Activated CD4-positive, alpha-beta T cell treated with anti-CD3 and anti-CD28 coated beads for 36 hours (primary cell): ENCODE measurements at regions of chr14 and their contacts with region 1.

Region 1: DNA sequence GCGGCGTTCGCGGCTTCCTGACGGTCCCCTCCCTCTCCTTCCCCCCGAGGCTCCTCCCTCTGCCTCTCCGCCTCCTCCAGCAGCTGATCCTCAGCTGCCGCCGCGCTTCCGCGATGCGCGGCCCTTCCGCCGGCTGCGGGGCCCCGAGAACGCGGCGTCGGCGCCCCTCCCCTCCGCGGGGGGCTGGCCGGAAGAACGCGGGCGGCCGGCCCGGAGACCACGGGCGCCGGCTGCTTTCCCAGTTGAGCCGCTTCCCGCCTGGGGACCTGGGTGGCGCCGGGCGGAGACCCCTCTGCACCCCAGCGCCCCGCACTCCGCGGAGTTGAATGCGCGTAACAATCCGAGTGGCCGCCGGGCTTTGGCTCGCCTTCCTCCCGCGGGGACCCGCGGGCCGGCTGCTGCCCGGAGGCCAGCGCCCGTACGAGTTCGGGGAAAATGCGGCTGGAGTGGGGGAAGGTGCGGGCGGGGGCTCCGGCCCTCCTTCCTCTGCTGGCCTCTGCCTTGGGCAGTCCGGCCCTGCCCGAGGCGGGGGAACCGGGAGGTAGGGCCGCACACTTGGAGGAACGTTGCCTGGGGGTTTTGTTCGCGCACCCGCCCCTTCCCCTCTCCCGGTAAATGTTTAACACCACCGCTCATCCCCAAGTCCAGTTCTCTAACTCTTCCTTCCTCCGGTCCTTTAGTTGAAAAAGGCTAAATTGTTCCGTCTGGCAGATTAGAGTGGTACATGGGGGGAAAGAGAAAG is 383 bp upstream of the DCAF5 start:
- DNase-seq: peak; percentile 96
- ATAC-seq: peak; percentile 93
- H3K4me3 Mint-ChIP-seq: peak overlapping the region; percentile 83
- H3K27ac Mint-ChIP-seq: peak overlapping the region; percentile 81
- H3K4me1 Mint-ChIP-seq: peaks cover 30% of the 10 kb centered on the region
- H3K27me3 Mint-ChIP-seq: no peaks in the 10 kb centered on the region

Region 2: GRCh38 chr14:67619446-67620216 is 1533.7 kb before region 1 on chr14 and contains the start of gene ARG2:
- CTCF ChIA-PET with region 1: no interaction called
- POLR2A ChIA-PET with region 1: no interaction called
- intact Hi-C with region 1: loop called in 1 of 2 experiments (anchors 5 kb)
- DNase-seq: peak; percentile 99
- ATAC-seq: peak; percentile 88
- H3K4me3 Mint-ChIP-seq: peak within 1 kb of the TSS; percentile 77
- H3K27ac Mint-ChIP-seq: peak within 1 kb of the TSS; percentile 73
- H3K4me1 Mint-ChIP-seq: peaks cover 31% of the 10 kb centered on the region
- H3K27me3 Mint-ChIP-seq: peaks cover 8% of the 10 kb centered on the region
- total RNA-seq, gene ARG2: 11.9 TPM

Region 3: DNA sequence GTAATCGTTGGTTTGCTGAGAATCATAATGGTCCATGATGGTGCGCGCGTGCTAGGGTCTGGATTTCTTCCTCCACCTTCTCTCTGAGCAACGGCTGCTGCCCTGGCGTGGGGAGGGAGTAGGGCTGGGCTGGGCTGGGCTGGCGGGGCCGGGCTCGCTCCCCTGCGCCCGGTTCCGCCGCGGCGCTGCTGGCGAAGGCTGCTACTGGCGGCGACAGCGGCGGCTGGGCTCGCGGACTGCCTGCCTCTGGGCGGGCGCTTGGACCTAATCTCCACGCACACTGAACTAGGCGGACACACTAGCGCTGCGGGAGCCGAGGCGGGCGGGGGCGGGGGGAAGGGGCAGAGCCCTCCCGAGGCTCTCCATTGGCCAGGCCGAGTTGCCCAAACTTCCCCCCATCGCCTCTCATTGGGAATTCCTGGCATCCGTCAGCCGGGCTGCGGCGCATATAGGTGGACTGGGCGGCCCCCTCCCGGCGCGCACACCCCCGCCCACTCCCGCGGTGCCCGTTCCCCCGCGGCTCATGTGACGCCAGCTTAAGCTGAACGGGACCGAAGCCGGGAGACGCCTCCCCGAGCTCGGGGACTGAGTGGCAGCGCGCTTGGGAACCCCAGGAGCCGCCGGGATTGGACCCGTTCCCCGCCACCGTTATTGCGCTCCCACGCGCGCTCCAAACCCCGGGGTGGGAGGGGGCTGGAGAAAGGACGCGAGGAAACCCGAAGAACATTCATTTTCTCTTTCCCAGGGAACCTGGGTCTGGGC is 174.1 kb before region 1 on chr14 and contains the start of gene ACTN1:
- CTCF ChIA-PET with region 1: no interaction called
- POLR2A ChIA-PET with region 1: no interaction called
- intact Hi-C with region 1: loop called (anchors 1 to 2 kb)
- DNase-seq: peak; percentile 84
- ATAC-seq: peak; percentile 72
- H3K4me3 Mint-ChIP-seq: peak within 1 kb of the TSS; percentile 79
- H3K27ac Mint-ChIP-seq: peak within 1 kb of the TSS; percentile 88
- H3K4me1 Mint-ChIP-seq: peaks cover 38% of the 10 kb centered on the region
- H3K27me3 Mint-ChIP-seq: peaks cover 2% of the 10 kb centered on the region
- total RNA-seq, gene ACTN1: 92.8 to 146 TPM

Region 4: GRCh38 chr14:69138189-69138535 is 15.1 kb before region 1 on chr14:
- CTCF ChIA-PET with region 1: interaction called, 81 read pairs
- POLR2A ChIA-PET with region 1: interaction called, 3 read pairs
- intact Hi-C with region 1: loop called (anchors 1 to 2 kb)
- DNase-seq: no peak
- ATAC-seq: no peak
- H3K4me3 Mint-ChIP-seq: no peak overlapping the region
- H3K27ac Mint-ChIP-seq: peak overlapping the region; percentile 5
- H3K4me1 Mint-ChIP-seq: peaks cover 70% of the 10 kb centered on the region
- H3K27me3 Mint-ChIP-seq: no peaks in the 10 kb centered on the region

Region 5: DNA sequence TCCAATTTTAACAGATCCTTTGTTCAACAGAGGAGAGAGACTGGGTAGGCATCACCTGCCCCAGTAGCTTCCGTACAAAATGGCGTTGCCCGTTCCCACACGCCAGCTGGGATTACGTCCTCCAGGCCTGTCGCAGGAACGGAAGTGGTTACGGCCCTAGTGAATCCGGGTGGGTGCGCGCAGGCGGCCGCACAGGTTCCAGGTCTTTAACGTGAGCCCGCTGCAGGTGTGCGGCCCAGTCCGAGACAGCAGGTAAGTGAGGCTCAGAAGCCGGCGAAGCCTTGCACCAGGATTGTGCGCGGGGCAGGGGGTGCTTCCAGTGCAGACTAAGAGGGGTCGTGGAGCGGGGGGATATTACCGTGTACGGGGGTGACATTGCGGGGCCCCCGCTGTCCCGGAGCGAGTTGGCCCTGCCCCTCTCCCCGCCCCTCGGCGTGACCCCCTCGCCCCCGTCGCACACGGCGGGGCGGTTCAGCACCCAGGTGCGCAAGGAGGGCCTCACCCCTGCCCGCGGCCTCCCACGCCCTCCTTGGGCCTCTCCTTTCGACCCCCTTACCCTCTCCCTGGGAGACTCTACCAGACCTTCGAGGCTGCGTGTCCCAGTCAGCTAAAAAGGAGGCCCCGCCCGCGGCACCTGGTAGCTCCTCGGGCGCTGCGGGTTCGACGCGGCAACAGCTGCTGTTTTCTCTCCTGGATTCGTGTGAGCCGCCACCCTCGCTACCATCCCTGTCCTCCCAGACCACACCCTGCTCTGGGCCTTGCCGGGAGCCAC is 38.2 kb after region 1 on chr14 and contains the start of gene EXD2:
- CTCF ChIA-PET with region 1: interaction called, 4 read pairs
- POLR2A ChIA-PET with region 1: no interaction called
- intact Hi-C with region 1: loop called (anchors 1 to 2 kb)
- DNase-seq: peak; percentile 90
- ATAC-seq: peak; percentile 93
- H3K4me3 Mint-ChIP-seq: peak within 1 kb of the TSS; percentile 92
- H3K27ac Mint-ChIP-seq: peak within 1 kb of the TSS; percentile 91
- H3K4me1 Mint-ChIP-seq: peaks cover 25% of the 10 kb centered on the region
- H3K27me3 Mint-ChIP-seq: no peaks in the 10 kb centered on the region
- total RNA-seq, gene EXD2: 10.8 to 14.5 TPM

Region 6: GRCh38 chr14:69226178-69226577 is 72.9 kb after region 1 on chr14:
- CTCF ChIA-PET with region 1: no interaction called
- POLR2A ChIA-PET with region 1: no interaction called
- intact Hi-C with region 1: no loop called
- DNase-seq: no peak
- ATAC-seq: no peak
- H3K4me3 Mint-ChIP-seq: no peak overlapping the region
- H3K27ac Mint-ChIP-seq: no peak overlapping the region
- H3K4me1 Mint-ChIP-seq: no peaks in the 10 kb centered on the region
- H3K27me3 Mint-ChIP-seq: no peaks in the 10 kb centered on the region

Region 7: GRCh38 chr14:70640938-70641547 is 1487.7 kb after region 1 on chr14:
- CTCF ChIA-PET with region 1: no interaction called
- POLR2A ChIA-PET with region 1: no interaction called
- intact Hi-C with region 1: loop called in 1 of 2 experiments (anchors 5 kb)
- DNase-seq: peak; percentile 79
- ATAC-seq: peak; percentile 80
- H3K4me3 Mint-ChIP-seq: peak overlapping the region; percentile 87
- H3K27ac Mint-ChIP-seq: peak overlapping the region; percentile 90
- H3K4me1 Mint-ChIP-seq: peaks cover 40% of the 10 kb centered on the region
- H3K27me3 Mint-ChIP-seq: no peaks in the 10 kb centered on the region